ENCODE measurements at regions of chr5 and their contacts with region 1.

Region 1: DNA sequence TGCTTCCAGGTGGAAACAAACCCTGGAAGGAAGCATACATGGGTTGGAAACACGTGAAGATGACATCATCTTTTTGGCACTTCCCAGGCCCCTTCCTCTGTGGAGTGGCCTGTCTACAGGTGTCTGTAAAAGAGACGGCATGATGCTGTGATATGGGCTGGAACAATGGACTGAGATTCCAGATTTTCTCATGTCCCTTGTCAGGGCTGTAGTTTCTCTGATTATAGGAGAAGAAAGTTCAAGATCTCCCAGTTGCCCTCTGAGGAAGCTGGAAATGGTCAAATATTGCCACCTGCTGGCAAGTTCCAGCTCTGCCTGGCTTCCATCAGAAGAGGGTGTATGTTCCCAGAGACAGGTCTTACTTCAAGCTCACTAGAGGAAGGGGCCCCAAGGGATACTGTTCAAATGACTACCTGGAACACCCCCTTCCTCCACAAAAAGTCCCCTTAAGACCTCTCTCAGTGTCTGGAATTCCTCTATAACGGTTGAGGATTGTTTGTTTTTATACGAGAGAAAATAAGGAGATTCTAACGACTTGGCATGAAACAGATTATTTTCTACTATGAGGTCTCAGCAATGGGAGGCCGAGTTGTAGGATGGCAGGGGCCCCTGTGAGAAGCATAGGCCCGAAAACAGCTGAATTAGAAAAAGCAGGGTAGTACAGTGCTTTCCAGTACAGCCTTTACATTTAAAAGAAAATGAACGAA is 7.3 kb upstream of the ANXA6 start:
- DNase-seq: no peak
- ATAC-seq: peak; percentile 84

Region 2: DNA sequence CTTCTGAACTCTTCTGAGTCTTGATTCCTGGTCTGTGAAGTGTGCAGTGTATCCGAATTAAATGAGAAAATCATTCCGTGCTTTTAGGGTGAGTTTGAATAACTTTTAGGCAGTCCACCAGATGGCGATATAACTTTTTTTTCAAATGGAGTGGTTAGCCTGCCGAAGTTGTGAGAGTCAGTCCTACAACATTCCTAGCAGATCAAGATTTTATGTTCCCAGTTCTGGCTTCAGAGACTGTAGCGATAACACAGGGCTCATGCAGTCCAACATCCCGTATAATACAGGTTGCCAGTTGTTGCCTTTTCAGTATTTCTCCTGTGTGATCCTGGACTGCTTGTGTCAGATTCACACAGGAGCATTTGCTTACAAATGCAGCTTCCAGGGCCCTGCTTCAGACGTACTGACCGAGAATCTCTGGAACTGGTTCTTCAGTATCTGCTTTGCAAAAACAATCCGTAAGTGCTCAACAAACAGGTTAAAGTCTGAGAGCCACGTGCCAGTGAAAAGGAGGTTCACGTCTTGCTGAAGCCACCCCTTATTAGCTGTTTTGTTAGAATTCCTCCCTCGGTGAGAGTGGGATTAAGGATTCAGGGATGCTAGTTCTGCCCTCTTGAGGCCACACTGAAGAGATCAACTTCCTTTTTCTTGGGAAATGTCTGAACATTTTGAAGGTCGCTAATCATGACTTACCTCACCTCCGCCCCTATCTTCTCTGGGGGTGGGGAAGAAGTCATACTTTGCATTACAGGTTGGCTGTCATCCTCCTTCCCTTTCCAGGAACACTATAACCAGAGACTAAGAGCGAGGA is 363.5 kb before region 1 on chr5:
- intact Hi-C with region 1: loop called (anchors 5 kb)
- DNase-seq: no peak
- ATAC-seq: peak; percentile 80

Region 3: GRCh38 chr5:151002250-151002649 is 162.6 kb before region 1 on chr5:
- intact Hi-C with region 1: loop called (anchors 5 kb)
- DNase-seq: no peak
- ATAC-seq: no peak

Region 4: DNA sequence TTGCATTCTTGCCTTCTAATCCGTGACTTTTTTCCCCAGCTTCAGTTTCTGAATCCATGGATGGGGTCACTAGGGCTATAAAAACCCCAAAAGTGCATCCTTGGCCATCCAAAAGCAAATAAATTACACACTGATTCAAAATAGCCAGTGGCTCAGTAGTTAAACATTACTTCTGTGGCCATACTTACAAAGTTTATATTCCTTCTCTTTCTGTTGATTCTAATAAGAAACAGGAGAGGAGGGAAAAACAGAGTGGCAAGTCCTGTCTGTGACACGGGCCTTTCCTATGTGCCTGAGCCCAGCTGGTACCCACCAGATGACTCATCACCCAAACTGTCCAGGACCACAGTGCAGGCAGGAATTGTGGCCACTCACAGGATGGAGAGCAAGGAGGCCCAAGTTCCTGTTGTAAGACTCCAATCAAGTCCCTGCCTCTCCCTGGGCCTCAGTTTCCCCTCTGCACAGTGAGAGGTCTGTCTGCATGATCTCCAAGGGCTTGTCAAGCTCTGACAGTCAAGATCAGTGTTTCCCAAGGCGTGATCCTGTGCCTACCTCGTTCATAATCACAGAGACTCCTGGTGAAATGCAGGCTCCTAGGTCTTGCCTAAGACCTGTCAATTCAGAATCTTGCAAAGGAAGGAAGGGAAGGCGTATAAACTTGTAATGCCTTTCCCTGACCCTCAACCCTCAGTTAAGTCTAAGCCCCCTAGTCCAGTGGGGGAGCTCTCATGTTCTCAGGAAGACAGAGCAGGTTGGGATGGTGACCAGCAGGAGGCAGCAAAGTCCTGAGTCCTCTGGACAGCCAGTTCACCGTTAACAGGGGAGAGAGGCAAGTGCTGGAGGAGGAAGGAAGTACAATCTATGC is 113.5 kb before region 1 on chr5:
- intact Hi-C with region 1: loop called (anchors 5 kb)
- DNase-seq: peak; percentile 85
- ATAC-seq: peak; percentile 83

Region 5: GRCh38 chr5:151126199-151126645 is 38.6 kb before region 1 on chr5:
- intact Hi-C with region 1: loop called (anchors 1 kb)
- DNase-seq: peak; percentile 93
- ATAC-seq: peak; percentile 60

Region 6: GRCh38 chr5:151239237-151239861 is 74.5 kb after region 1 on chr5:
- intact Hi-C with region 1: loop called (anchors 2 kb)
- DNase-seq: peak; percentile 96
- ATAC-seq: peak; percentile 75

Measured in Right ventricle myocardium inferior (tissue), 1 donor.